Adrenal gland (tissue), 19 donors: ENCODE measurements at regions of chr1 and their contacts with region 1.

Region 1: DNA sequence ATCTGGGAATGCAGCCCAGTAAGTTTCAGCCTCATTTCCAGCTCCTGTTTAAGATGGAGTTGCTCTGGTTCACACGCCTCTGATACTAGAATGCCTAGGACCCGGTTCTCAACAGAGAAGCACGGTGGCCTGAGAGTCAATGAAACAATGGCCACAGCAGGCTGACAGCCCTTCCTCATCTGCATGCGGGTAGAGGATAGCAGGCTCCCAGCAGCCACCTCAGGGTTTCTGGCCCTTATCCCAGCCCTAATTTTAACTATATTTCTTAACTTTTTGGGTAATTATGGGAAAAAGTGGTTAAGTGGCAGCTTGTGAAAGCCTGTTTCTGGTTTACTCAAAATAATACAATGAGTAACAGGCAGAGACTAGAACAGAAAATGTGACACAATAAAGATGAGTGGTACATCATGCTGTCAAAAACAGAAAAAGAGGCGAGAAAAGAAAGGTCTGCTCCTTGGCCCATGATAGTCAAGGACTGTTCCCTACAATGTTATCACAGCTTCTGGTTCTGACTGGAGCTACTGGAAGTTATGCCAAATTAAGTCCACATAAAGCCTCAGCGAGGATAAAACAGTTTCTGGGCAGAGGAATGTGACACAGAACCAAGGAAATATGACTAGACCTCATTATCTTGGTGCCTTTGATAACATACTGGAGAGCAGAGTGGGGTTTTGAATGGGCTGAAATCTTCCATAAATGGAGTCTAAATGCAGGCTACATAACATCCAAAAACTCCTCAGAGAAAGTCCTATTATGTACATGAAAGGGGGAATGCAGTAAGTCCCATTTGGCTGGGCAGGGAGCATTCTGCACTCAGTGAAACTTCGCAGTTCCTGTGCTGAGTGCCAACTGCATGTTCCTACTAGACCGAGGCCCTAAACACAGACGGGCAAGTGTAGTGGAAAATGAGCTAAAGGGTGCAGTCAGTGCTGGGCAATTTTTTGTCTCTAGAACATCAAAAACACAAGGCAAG is 92.1 kb downstream of the NIBAN1 start:
- DNase-seq: peak in 4 of 7 donors; percentile 19 to 73 (median 36)
- H3K4me3 ChIP-seq: no peak overlapping the region
- H3K27ac ChIP-seq: peak overlapping the region in 4 of 5 donors; percentile 4 to 67 (median 53)
- H3K4me1 ChIP-seq: peaks cover 15 to 18% of the 10 kb centered on the region in 2 donors
- H3K27me3 ChIP-seq: no peaks in the 10 kb centered on the region
- CTCF ChIP-seq: no peak
- POLR2A ChIP-seq: no peak

Region 2: DNA sequence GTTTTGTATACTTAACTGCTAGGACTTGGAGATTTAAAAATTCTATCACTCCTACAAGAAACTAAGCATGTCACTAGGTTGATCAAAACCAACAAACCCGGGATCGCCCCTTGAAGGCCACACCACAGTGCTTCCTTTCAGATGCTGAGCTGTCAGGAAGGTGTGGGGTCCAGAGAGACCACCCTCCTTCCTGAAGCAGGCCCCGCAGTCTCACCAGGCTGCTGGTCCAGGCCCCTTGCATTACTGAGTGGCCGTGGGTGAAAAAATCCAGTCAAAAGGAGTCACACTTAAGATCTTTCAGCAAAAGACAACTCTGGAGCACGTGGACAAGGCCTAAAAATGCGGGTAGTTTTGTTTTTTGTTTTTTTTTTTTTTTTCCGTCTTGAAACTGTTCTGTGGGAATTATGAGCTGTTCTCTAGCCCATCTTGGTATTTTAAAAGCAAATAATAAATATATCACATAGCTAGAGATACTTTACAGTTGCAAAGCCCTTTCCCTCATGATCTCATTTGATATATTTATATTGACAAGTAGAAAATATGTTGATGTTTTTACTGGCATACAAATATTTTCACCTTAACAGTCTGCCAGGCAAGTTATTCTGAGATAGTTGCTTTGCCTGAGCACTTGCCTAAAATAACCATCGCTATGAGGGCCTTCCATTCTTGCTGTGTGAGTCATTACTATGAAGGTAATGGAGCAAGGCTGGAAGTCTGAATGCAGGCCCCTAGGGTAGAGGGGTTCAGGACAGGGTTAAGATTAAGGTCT is 54.4 kb before region 1 on chr1:
- intact Hi-C with region 1: loop called in 1 of 2 experiments (anchors 10 kb)
- DNase-seq: peak in 4 of 7 donors; percentile 32 to 53 (median 36)
- H3K4me3 ChIP-seq: no peak overlapping the region
- H3K27ac ChIP-seq: peak overlapping the region in 4 of 5 donors; percentile 59 to 81 (median 64)
- H3K4me1 ChIP-seq: peaks cover 8 to 21% of the 10 kb centered on the region in 2 donors
- H3K27me3 ChIP-seq: no peaks in the 10 kb centered on the region
- CTCF ChIP-seq: no peak
- POLR2A ChIP-seq: no peak

Region 3: DNA sequence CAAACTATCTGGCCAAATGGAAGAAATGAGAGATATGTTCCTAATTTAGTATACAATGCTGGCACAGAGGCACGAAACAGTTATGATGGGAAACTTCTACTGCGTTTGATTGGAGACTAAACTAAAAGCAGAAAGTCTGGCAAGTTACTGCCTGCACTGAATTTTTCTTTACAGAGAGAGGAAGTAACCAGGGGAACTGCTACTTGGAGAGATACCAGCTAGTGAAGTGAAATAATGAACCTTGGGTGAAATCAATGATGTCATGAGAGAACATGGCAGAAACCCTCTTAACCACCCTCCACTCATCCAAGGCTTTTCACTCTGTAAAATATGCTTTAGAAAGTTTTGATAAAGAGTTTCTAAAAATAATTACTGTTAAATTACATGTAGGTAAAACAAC is 62.8 kb after region 1 on chr1:
- intact Hi-C with region 1: no loop called
- DNase-seq: no peak
- H3K4me3 ChIP-seq: no peak overlapping the region
- H3K27ac ChIP-seq: no peak overlapping the region
- H3K4me1 ChIP-seq: no peaks in the 10 kb centered on the region
- H3K27me3 ChIP-seq: no peaks in the 10 kb centered on the region
- CTCF ChIP-seq: no peak
- POLR2A ChIP-seq: no peak

Region 4: GRCh38 chr1:185027252-185027882 is 145.1 kb after region 1 on chr1:
- intact Hi-C with region 1: no loop called
- DNase-seq: no peak
- H3K4me3 ChIP-seq: no peak overlapping the region
- H3K27ac ChIP-seq: no peak overlapping the region
- H3K4me1 ChIP-seq: no peaks in the 10 kb centered on the region
- H3K27me3 ChIP-seq: no peaks in the 10 kb centered on the region
- CTCF ChIP-seq: no peak
- POLR2A ChIP-seq: no peak